ENCODE measurements at regions of chr5 and their contacts with region 1.

Region 1: GRCh38 chr5:160287378-160288051 is 24.8 kb downstream of the CCNJL start:
- DNase-seq: no peak
- ATAC-seq: peak; percentile 61
- H3K4me3 ChIP-seq: no peak overlapping the region
- H3K27ac ChIP-seq: no peak overlapping the region; the same call in 1 of the 2 replicates
- H3K4me1 ChIP-seq: peaks cover 31% of the 10 kb centered on the region
- H3K27me3 ChIP-seq: no peaks in the 10 kb centered on the region
- CTCF ChIP-seq: no peak

Region 2: DNA sequence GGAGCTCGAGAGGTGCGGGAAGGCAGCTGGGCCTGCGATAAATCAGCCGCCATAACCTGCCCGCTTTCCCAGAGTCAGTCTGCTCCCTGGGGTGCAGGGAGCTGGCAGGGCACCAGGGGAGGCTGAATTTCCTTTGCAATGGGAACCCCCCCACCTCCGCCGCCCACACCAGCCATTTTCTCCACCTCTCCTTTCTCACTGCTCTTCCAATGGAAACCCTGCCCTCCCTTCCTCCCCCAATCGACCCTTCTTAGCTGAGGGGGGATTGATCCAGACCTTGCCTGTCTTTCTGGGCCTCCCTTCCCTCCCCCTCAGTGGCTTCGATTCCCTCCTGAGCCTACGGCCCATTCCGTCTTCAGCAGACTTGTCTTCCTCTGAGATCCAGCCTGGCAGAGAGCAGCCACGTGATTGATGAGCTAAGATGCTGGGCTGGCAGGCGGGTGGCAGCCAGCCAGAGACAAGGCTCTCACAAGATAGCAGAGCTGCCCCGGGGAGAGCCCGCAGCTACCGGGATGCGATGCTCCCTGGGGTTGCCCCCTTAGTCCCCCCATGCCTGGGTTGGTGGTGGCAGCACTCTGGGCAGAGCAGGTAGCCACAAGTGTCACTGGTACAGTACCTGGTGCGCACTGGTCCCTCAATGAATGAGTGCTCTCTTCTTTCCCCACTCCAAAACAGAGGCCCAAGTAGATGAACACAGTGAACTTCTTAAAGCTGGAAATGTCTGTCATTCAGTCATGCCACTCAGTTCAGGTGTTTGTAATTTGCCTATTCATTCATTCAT is 111.9 kb before region 1 on chr5:
- CTCF ChIA-PET with region 1: no interaction called
- POLR2A ChIA-PET with region 1: no interaction called
- in situ Hi-C with region 1: no loop called
- intact Hi-C with region 1: no loop called
- DNase-seq: no peak
- ATAC-seq: no peak
- H3K4me3 ChIP-seq: no peak overlapping the region
- H3K27ac ChIP-seq: no peak overlapping the region
- H3K4me1 ChIP-seq: no peaks in the 10 kb centered on the region
- H3K27me3 ChIP-seq: no peaks in the 10 kb centered on the region
- CTCF ChIP-seq: no peak

Region 3: GRCh38 chr5:160342403-160342941 is 55.0 kb after region 1 on chr5:
- CTCF ChIA-PET with region 1: interaction called, 19 read pairs
- POLR2A ChIA-PET with region 1: no interaction called
- in situ Hi-C with region 1: no loop called
- intact Hi-C with region 1: no loop called
- DNase-seq: no peak
- ATAC-seq: no peak; the same call in 1 of the 2 replicates
- H3K4me3 ChIP-seq: no peak overlapping the region
- H3K27ac ChIP-seq: no peak overlapping the region; the same call in 1 of the 2 replicates
- H3K4me1 ChIP-seq: peaks cover 4% of the 10 kb centered on the region
- H3K27me3 ChIP-seq: no peaks in the 10 kb centered on the region
- CTCF ChIP-seq: no peak

Region 4: DNA sequence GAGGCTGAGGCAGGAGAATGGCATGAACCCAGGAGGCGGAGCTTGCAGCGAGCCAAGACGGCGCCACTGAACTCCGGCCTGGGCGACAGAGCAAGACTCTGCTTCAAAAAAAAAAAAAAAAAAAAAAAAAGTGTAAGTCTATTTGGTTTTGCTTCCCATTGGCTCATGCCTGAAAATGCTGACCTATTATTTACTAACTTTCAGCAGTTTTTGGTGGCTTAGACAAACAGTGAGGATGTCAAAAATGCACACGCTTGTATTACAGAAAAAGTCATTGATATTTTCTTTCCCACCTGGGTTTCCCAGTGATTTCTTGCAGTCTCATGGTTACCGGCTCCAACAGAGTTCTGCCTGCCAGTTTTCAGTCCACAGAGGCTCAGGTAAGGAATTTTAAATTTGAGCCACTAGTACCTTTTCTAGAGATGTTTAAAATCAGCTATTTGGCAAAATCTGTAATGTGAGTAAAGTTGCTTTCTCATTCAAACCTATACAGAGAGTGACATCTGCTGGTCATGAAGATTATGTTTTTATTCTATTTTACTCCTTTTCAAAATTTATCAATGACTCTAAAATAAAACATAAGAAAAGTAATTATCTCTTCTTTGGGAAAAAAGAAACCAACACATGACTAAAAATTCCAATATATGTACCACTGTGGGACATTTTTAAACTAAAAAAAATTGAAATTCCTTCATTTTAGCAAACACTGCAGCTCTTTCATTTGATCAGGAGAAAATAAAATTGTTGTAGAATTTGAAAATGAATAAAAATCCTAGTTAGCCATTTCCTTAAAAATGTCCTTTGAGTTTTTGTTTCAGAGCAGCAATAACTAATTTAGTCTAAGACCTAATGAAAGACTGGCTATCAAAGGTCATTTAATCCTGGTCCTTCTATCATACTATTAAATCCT is 103.5 kb after region 1 on chr5:
- CTCF ChIA-PET with region 1: no interaction called
- POLR2A ChIA-PET with region 1: no interaction called
- in situ Hi-C with region 1: no loop called
- intact Hi-C with region 1: no loop called
- DNase-seq: no peak
- ATAC-seq: no peak
- H3K4me3 ChIP-seq: no peak overlapping the region
- H3K27ac ChIP-seq: no peak overlapping the region
- H3K4me1 ChIP-seq: no peaks in the 10 kb centered on the region
- H3K27me3 ChIP-seq: no peaks in the 10 kb centered on the region
- CTCF ChIP-seq: peak; percentile 65; the same call in 1 of the 2 replicates

Measured in Panc1 (cell line).